Esophagus muscularis mucosa (tissue), 4 donors: ENCODE measurements at regions of chr6 and their contacts with region 1.

Region 1: DNA sequence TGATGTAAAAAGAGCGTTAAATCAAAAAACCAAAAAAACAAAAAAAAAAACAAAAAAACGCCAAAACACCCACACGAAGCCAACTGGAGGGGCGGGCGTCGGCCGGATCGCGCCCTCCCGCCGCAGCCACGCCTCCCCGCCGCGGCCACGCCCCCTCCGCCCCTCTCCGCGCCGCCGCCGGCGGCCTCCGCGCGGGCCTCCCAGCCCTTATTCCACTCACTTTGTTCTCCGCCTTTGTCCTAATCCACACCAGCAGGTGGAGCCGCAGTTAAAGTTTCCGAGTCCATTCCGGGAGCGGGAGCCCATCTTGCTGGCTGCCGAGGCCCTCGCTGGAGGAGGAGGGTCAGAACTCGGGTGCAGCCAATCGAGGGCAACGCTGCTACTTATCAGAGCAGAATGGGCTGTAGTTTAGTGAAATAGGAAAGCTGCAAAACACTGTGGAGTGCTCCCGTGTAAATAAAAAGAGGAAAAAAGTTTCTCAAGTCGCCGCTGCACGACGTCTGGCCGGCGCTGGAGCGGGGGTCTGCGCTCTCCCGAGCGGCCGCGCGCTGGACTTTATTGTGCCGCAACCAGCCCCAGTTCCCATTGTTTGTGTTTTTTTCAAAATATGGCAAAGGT is at the start of gene ASF1A:
- DNase-seq: peak; percentile 99
- H3K4me3 ChIP-seq: peak within 1 kb of the TSS; percentile 88 to 97 (median 95)
- H3K27ac ChIP-seq: peak within 1 kb of the TSS; percentile 93 to 98 (median 97)
- H3K4me1 ChIP-seq: peaks cover 28 to 49% (median 40%) of the 10 kb centered on the region in 4 donors
- H3K27me3 ChIP-seq: peaks cover 0 to 7% (median 0%) of the 10 kb centered on the region in 4 donors
- CTCF ChIP-seq: peak; percentile 49 to 63 (median 57)
- EP300 ChIP-seq: no peak
- POLR2A ChIP-seq: peak; percentile 16
- total RNA-seq, gene ASF1A: 6.6 to 13.7 (median 10.9) TPM

Region 2: DNA sequence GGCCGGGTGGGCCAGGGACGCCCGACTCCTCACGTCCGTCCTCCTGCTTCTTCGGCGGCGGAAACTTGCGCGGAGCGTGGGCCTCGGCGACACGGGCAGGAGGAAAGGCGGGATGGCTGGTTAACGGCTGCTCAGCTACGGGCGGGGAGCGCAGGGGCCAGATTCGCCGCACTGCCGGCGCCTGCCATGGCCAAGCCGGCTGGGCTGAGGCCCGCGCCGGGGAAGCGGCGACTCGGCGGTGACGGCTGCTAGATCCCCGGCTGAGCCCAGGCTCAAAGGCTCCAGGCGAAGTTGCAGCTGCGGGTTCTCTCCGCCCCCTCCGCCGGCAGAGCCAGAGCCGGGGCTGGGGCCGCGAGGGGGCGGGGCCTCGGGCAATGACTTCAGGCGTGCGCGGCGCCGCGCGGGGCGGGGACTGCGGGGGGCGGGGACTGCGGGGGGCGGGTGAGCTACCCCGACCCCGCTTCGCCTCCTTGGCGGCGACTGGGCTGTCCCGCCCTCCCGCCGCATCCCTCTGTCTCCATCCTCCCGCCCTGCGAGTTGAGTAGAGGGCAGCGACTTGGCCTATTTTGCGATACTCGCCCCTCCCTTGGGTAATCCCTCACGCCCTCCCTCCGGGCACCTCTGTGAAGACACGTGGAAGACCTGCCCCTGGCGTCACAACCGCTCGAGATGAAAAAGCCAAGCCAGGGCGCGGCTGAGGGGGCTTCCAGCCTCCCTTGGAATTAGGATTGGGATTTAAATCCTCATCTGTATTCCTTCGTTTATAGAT is 242.4 kb before region 1 on chr6 and contains the start of gene CEP85L:
- intact Hi-C with region 1: loop called (anchors 10 kb)
- DNase-seq: peak; percentile 95
- H3K4me3 ChIP-seq: peak within 1 kb of the TSS; percentile 79 to 91 (median 81)
- H3K27ac ChIP-seq: peak within 1 kb of the TSS; percentile 93 to 99 (median 96)
- H3K4me1 ChIP-seq: peaks cover 15 to 24% (median 21%) of the 10 kb centered on the region in 4 donors
- H3K27me3 ChIP-seq: no peaks in the 10 kb centered on the region
- CTCF ChIP-seq: peak in 1 of 3 experiments; percentile 2
- EP300 ChIP-seq: no peak
- POLR2A ChIP-seq: peak; percentile 78
- total RNA-seq, gene CEP85L: 12.6 to 16.2 (median 13.4) TPM

Region 3: GRCh38 chr6:118934461-118935330 is 40.8 kb after region 1 on chr6 and contains the start of gene MCM9:
- intact Hi-C with region 1: loop called (anchors 2 kb)
- DNase-seq: peak; percentile 97
- H3K4me3 ChIP-seq: peak within 1 kb of the TSS; percentile 64 to 90 (median 86)
- H3K27ac ChIP-seq: peak within 1 kb of the TSS; percentile 91 to 96 (median 94)
- H3K4me1 ChIP-seq: peaks cover 0 to 25% (median 17%) of the 10 kb centered on the region in 4 donors
- H3K27me3 ChIP-seq: no peaks in the 10 kb centered on the region
- CTCF ChIP-seq: peak in 1 of 3 experiments; percentile 12
- EP300 ChIP-seq: no peak
- POLR2A ChIP-seq: no peak
- total RNA-seq, gene MCM9: 10.8 to 18.1 (median 11.3) TPM